Caco-2 (cell line): ENCODE measurements at regions of chr14 and their contacts with region 1.

Region 1: GRCh38 chr14:50532502-50533240 is at the start of gene MAP4K5:
- DNase-seq: peak; percentile 91 to 94
- H3K4me3 ChIP-seq: peak within 1 kb of the TSS; percentile 92
- H3K4me3 Mint-ChIP-seq: peak within 1 kb of the TSS; percentile 82
- H3K27ac Mint-ChIP-seq: peak within 1 kb of the TSS; percentile 63
- H3K4me1 ChIP-seq: peaks cover 14% of the 10 kb centered on the region
- H3K4me1 Mint-ChIP-seq: peaks cover 22% of the 10 kb centered on the region
- H3K27me3 ChIP-seq: no peaks in the 10 kb centered on the region
- H3K27me3 Mint-ChIP-seq: peaks cover 2% of the 10 kb centered on the region
- CTCF ChIP-seq: peak; percentile 80 to 95
- total RNA-seq, gene MAP4K5: 48.4 and 48.6 TPM in 2 replicates

Region 2: DNA sequence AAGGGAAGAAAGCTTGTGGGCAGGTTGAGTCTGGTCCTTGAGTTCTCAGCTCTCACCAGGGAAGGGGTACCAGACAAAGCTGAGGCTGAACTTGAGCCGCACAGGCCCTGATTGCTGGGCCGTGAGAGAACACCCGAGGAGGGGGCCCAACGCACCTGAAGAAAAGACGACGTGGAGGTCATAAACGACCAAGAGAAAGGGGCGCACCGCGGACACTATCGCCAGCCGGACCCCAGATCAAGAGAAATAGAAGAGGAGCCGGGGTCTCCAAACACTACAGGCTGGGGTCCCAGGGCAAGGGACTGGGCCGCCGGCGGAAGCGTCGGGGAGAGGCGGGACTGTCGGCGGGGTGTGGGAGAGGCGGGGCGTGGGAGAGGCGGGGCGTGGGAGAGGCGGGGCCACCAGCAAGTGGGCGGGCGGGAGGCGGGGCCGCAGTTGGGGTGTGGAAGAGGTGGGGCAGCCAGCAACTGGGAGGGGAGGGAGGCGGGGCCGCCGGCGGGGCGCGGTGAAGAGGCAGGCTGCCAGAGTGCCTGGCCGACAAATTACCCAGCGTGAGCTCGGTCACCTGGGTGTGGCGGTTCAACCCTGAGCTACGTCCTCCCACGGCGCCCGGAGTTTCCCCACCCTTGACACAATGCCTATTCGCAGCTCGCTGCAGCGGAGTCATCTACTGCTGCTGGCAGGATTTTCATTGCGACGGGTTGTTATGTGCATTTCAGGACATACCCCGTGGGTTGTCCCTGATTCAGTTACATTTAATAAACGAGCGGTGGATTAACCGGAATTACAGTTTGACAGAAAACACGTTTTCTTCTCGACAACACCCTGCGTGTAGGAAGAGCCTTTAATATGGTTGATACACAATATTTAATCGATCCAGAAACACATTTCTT is 664.6 kb before region 1 on chr14:
- CTCF ChIA-PET with region 1: no interaction called
- POLR2A ChIA-PET with region 1: no interaction called
- intact Hi-C with region 1: loop called (anchors 5 kb)
- DNase-seq: peak; percentile 94 to 97
- H3K4me3 ChIP-seq: peak overlapping the region; percentile 47
- H3K4me3 Mint-ChIP-seq: peak overlapping the region; percentile 95
- H3K27ac Mint-ChIP-seq: peak overlapping the region; percentile 89
- H3K4me1 ChIP-seq: peaks cover 11% of the 10 kb centered on the region
- H3K4me1 Mint-ChIP-seq: peaks cover 5% of the 10 kb centered on the region
- H3K27me3 ChIP-seq: no peaks in the 10 kb centered on the region
- H3K27me3 Mint-ChIP-seq: no peaks in the 10 kb centered on the region
- CTCF ChIP-seq: no peak

Region 3: GRCh38 chr14:50116181-50116956 is 416.3 kb before region 1 on chr14 and contains the start of gene VCPKMT:
- CTCF ChIA-PET with region 1: no interaction called
- POLR2A ChIA-PET with region 1: no interaction called
- intact Hi-C with region 1: loop called (anchors 5 kb)
- DNase-seq: peak; percentile 91 to 96
- H3K4me3 ChIP-seq: peak within 1 kb of the TSS; percentile 92
- H3K4me3 Mint-ChIP-seq: peak within 1 kb of the TSS; percentile 96
- H3K27ac Mint-ChIP-seq: peak within 1 kb of the TSS; percentile 99
- H3K4me1 ChIP-seq: 0 out of 2 replicates have a peak, but pooled peaks cover 4% of the 10 kb centered on the region
- H3K4me1 Mint-ChIP-seq: no peaks in the 10 kb centered on the region
- H3K27me3 ChIP-seq: no peaks in the 10 kb centered on the region
- H3K27me3 Mint-ChIP-seq: no peaks in the 10 kb centered on the region
- CTCF ChIP-seq: no peak
- total RNA-seq, gene VCPKMT: 9.7 TPM in 2 replicates

Region 4: GRCh38 chr14:50321009-50321660 is 211.5 kb before region 1 on chr14:
- CTCF ChIA-PET with region 1: interaction called, 14 read pairs
- POLR2A ChIA-PET with region 1: interaction called, 4 read pairs
- intact Hi-C with region 1: loop called (anchors 1 kb)
- DNase-seq: peak; percentile 74 to 75
- H3K4me3 ChIP-seq: no peak overlapping the region
- H3K4me3 Mint-ChIP-seq: no peak overlapping the region
- H3K27ac Mint-ChIP-seq: no peak overlapping the region
- H3K4me1 ChIP-seq: no peaks in the 10 kb centered on the region; the same call in 1 of the 2 replicates
- H3K4me1 Mint-ChIP-seq: no peaks in the 10 kb centered on the region
- H3K27me3 ChIP-seq: no peaks in the 10 kb centered on the region
- H3K27me3 Mint-ChIP-seq: no peaks in the 10 kb centered on the region
- CTCF ChIP-seq: peak; percentile 73 to 90

Region 5: DNA sequence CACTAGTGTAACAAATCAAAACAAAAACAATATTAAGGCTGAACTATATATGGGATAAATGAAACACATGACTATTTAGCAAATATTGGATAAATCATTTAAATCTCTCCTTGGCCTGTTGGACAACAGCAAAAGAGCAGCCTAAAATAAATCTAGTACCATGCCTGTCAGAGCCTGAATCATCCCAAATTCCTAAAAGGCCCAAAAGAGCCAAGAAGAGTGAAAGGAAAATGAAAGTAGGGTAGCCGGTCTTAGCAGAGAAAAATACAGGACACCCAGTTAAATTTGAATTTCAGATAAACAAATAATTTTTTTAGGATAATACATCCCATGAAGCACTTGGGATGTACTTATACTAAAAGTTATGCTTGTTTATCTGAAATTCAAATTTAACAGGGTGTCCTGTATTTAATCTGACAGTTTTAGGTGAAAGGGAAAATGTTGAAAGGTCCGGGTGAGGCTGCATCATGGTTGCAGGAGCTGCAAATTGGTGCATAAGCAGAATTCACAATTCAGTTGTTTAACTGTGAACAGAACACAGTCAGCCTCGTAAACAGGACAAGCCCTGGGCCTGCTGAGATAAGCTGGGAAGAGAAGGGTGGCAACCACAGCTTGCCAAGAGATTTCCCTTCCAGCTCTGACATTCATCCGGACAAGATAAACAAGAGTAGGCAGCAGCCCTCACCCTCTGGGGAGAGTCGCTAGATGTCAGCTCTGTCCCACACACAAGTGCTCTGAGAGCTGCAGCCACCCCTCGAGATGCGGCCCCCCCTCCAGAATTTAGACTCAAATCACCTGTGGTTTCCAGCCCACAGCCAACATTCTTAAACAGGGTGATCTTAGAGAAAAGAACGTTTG is 190.2 kb before region 1 on chr14:
- CTCF ChIA-PET with region 1: no interaction called
- POLR2A ChIA-PET with region 1: no interaction called
- intact Hi-C with region 1: loop called (anchors 5 kb)
- DNase-seq: peak; percentile 17 to 38
- H3K4me3 ChIP-seq: no peak overlapping the region
- H3K4me3 Mint-ChIP-seq: no peak overlapping the region
- H3K27ac Mint-ChIP-seq: no peak overlapping the region
- H3K4me1 ChIP-seq: peaks cover 3% of the 10 kb centered on the region
- H3K4me1 Mint-ChIP-seq: peaks cover 12% of the 10 kb centered on the region
- H3K27me3 ChIP-seq: no peaks in the 10 kb centered on the region
- H3K27me3 Mint-ChIP-seq: no peaks in the 10 kb centered on the region
- CTCF ChIP-seq: peak in 1 of 2 experiments; percentile 6

Region 6: DNA sequence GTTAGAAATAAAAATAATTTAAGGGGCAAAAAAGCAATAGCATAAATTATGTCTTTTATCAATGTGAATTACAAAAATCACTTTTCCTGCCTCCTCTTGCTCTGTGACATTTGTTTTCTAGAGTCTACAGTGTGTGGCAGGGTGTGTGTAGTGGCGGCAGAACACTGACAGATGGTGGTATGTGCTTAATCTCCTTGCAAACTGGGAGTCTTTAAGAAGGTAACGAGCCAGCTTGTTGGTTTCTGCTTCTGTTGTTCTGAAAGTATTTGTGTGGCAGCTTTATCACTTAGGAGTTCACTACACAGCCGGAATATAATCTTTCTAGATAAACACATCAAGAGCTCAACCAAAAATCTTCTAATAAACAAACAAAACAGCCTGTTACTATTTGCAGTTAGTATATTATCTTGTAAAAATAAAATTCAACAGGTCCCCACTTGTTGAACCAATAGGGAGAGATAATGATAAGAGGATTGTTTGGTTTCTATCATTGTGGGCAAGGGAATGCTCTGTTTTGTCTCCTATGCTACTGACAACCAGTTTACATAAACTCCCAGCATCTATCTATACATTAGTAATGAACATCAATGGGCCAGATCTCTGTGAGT is 148.9 kb before region 1 on chr14:
- CTCF ChIA-PET with region 1: no interaction called
- POLR2A ChIA-PET with region 1: no interaction called
- intact Hi-C with region 1: loop called (anchors 2 kb)
- DNase-seq: peak in 1 of 2 experiments; percentile 26
- H3K4me3 ChIP-seq: no peak overlapping the region
- H3K4me3 Mint-ChIP-seq: no peak overlapping the region
- H3K27ac Mint-ChIP-seq: no peak overlapping the region
- H3K4me1 ChIP-seq: peaks cover 12% of the 10 kb centered on the region
- H3K4me1 Mint-ChIP-seq: peaks cover 8% of the 10 kb centered on the region
- H3K27me3 ChIP-seq: no peaks in the 10 kb centered on the region
- H3K27me3 Mint-ChIP-seq: no peaks in the 10 kb centered on the region
- CTCF ChIP-seq: peak in 1 of 2 experiments; percentile 28

Region 7: DNA sequence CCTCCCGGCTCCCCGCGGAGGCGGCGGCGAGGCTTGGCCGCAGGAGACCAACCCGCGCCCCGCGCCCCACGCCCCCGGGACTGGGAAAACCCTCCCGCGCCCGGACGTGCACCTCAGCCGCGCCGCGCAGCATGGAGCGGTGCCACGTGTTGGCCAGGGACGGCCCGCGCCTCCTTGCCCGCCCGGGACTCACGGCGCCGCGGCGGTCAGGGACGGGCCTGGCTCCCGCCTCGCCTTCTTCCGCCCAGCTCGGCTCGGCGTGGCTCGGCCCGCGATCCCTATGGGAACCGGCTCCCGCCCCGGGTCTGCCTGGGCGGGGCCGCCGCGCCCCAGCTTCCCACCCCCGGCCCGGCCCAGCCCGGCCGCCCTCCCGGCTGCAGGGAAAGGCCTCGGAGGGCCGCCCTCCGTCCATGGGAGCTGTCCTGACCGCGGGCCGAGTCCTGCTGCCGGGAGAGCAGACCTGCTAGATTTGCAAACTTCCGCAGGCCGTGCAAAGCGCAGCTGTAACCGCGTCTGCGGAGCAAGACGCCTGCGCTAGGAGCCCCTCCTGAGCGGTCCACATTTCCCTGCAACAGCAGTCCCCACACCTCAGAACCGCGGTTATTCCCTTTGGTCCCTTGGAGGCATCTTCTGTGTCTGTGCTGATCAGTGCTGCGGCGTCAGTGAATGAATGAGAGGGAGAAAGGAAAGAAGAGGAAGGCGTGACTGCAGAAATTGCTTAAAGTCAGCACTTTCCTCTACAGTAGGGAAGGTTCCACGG is 135.9 kb before region 1 on chr14 and contains the start of gene CDKL1:
- CTCF ChIA-PET with region 1: no interaction called
- POLR2A ChIA-PET with region 1: no interaction called
- intact Hi-C with region 1: loop called (anchors 5 kb)
- DNase-seq: peak; percentile 74 to 83
- H3K4me3 ChIP-seq: peak within 1 kb of the TSS; percentile 38
- H3K4me3 Mint-ChIP-seq: peak within 1 kb of the TSS; percentile 87
- H3K27ac Mint-ChIP-seq: peak within 1 kb of the TSS; percentile 90
- H3K4me1 ChIP-seq: no peaks in the 10 kb centered on the region; the same call in none of the 2 replicates
- H3K4me1 Mint-ChIP-seq: no peaks in the 10 kb centered on the region
- H3K27me3 ChIP-seq: no peaks in the 10 kb centered on the region
- H3K27me3 Mint-ChIP-seq: no peaks in the 10 kb centered on the region
- CTCF ChIP-seq: no peak
- total RNA-seq, gene CDKL1: 4.5 and 5.4 TPM in 2 replicates

Region 8: GRCh38 chr14:50785457-50786063 is 252.9 kb after region 1 on chr14:
- CTCF ChIA-PET with region 1: no interaction called
- POLR2A ChIA-PET with region 1: no interaction called
- intact Hi-C with region 1: no loop called
- DNase-seq: no peak
- H3K4me3 ChIP-seq: no peak overlapping the region
- H3K4me3 Mint-ChIP-seq: no peak overlapping the region
- H3K27ac Mint-ChIP-seq: no peak overlapping the region
- H3K4me1 ChIP-seq: no peaks in the 10 kb centered on the region
- H3K4me1 Mint-ChIP-seq: no peaks in the 10 kb centered on the region
- H3K27me3 ChIP-seq: no peaks in the 10 kb centered on the region
- H3K27me3 Mint-ChIP-seq: no peaks in the 10 kb centered on the region
- CTCF ChIP-seq: no peak